PC-9 (cell line): ENCODE measurements at regions of chr1 and their contacts with region 1.

Region 1: DNA sequence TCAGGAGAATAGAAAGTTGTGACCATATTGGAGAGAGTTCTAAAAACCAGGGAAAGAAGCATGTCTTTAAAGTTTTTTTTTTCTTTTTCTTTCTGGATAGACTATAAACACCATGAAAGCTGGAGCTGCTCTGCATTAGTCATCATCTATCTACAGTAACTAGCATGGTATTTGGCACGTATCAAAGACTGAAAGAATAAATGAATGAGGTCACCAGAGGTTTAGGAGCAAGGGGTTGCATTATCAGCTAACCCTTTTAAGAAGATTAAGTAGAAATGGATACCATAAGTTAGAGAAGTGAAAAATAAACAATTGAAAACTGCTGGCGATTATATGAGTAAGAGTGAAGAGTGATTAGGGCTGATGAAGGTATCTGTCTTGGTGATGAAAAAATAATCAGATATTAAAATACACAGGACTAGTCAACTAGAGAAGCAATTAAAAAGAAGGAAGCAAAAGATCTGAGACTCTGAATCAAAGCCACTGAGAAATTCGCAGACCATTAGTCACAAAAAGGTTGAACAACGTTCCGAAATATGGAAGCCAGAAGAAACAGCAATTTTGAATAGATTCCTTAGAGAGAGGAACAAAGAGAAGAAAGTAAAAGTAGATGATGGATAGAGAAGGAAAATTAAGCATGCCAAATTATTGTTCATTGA is 536.4 kb downstream of the DPYD start:
- DNase-seq: peak in 1 of 2 experiments; percentile 41
- H3K4me3 ChIP-seq: no peak overlapping the region
- H3K27ac ChIP-seq: no peak overlapping the region
- H3K4me1 ChIP-seq: no peaks in the 10 kb centered on the region
- H3K27me3 ChIP-seq: no peaks in the 10 kb centered on the region
- CTCF ChIP-seq: no peak

Region 2: GRCh38 chr1:97304366-97304765 is 80.1 kb before region 1 on chr1:
- CTCF ChIA-PET with region 1: no interaction called
- POLR2A ChIA-PET with region 1: interaction called, 31 read pairs
- intact Hi-C with region 1: no loop called
- DNase-seq: no peak
- H3K4me3 ChIP-seq: no peak overlapping the region
- H3K27ac ChIP-seq: no peak overlapping the region
- H3K4me1 ChIP-seq: no peaks in the 10 kb centered on the region
- H3K27me3 ChIP-seq: no peaks in the 10 kb centered on the region
- CTCF ChIP-seq: no peak

Region 3: DNA sequence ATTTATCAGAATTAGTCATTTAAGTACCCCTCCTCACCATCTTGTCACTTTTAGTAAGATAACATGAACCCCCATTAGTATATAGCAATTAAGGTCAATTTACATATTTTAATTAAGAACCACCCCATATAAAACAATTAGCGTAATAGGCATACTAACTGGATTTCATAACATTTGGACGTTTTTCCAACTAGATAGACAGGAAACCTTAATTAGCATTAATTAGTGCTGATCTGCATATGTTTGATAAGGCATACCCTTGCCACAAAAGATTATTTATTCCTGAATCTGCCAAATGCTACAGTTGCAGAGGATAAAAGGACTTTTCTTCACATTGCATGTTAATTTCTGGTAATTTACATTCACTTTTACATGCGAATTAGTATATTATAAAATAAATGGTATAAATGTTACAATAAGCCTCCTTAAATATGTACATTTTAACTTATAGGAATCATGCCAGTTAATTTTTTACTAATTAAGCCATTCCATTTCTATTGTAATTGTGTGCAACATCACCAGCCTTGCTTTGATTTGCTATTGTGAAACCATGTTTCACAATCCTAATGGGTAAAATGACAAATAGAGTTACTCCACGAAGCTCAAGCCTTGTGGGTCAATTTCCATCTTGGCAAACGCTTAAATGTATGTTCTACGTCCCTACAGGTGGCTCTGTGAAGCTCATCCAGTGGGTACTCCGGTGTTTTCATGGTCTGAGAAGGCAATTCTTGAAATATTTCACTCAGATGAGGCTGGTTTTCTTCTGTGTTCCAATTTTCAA is 66.8 kb after region 1 on chr1:
- CTCF ChIA-PET with region 1: no interaction called
- POLR2A ChIA-PET with region 1: no interaction called
- intact Hi-C with region 1: no loop called
- DNase-seq: no peak
- H3K4me3 ChIP-seq: no peak overlapping the region
- H3K27ac ChIP-seq: no peak overlapping the region
- H3K4me1 ChIP-seq: no peaks in the 10 kb centered on the region
- H3K27me3 ChIP-seq: no peaks in the 10 kb centered on the region
- CTCF ChIP-seq: no peak

Region 4: DNA sequence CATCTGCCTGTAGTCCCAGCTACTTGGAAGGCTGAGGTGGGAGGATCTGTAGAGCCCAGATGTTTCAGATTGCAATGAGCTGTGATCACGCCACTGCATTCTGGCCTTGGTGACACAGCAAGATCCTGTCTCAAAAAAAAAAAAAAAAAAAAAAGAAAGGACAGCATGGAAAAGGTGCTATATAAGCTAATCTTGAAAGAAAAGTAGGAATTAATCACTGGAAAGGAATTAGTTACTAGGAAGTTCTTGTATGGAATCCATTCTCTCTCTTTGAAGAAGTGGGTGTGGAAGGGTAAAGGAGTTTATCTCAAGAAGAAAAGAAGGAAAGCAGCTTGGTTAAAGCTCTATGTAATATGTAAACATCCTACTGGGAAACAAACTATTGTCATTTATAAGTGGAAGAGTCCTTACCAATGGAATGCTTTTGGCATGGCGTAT is 197.2 kb after region 1 on chr1:
- CTCF ChIA-PET with region 1: no interaction called
- POLR2A ChIA-PET with region 1: no interaction called
- intact Hi-C with region 1: loop called (anchors 1 kb)
- DNase-seq: peak; percentile 40 to 74
- H3K4me3 ChIP-seq: no peak overlapping the region
- H3K27ac ChIP-seq: peak overlapping the region; percentile 7; the same call in 1 of the 2 replicates
- H3K4me1 ChIP-seq: no peaks in the 10 kb centered on the region
- H3K27me3 ChIP-seq: no peaks in the 10 kb centered on the region
- CTCF ChIP-seq: no peak